Activated T-helper 1 cell treated with anti-CD3 and anti-CD28 coated beads, Interleukin-12 subunit alpha, Interleukin-12 subunit beta, Interleukin-2, Interleukin-4 antibody, amounts not matched to agents 30 ng/mL and 10 ng/mL and 1 ng/mL, durations not matched to agents 14 hours and 24 hours and 36 hours (primary cell): ENCODE measurements at regions of chr14 and their contacts with region 1.

Region 1: DNA sequence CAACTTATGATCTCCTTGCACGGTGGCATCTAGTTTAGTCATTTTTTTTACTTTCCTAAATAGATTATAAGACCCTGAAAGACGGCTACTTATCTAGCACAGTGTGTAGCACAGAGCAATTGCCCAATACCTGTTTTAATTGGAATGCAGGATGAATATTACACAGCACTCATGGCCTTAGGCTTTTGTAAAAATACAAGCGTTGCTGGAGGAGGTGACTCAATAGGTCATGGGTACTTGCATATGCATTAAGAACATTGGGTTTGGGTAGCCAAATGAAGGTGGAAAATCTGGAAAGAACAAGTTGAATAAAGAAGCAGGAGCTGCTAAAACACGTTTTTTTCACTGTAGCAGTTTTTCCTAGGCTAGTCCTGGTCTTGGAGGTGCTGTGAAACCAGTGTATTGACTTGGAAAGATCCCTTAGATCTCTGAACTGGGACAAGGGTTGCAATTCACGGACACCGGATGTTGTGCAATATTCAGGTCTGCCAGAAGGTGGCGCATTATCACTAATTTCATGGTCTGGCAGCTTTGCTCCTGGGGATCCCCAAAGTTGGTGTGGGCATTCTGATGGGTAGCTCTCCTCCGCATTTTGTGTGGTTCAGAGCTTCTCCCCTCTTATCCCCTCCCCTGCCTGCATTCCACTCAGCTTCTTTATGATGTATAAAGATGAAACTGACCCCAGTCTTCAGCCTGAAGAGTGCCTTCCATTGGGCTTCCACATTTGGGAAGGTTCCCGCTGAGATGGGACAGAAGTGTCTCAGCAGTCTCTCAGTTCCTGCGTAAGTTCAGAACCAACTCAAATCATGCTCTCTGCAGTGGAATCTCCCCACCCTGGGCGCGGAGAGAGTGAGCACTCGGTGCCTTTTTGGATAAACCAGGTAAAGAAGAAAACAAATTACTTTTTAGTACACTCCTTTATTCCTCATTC is 278.3 kb downstream of the NRXN3 start:
- DNase-seq: peak; percentile 13
- H3K4me3 Mint-ChIP-seq: no peak overlapping the region
- H3K27ac Mint-ChIP-seq: no peak overlapping the region
- H3K4me1 Mint-ChIP-seq: no peaks in the 10 kb centered on the region
- H3K27me3 Mint-ChIP-seq: no peaks in the 10 kb centered on the region

Region 2: DNA sequence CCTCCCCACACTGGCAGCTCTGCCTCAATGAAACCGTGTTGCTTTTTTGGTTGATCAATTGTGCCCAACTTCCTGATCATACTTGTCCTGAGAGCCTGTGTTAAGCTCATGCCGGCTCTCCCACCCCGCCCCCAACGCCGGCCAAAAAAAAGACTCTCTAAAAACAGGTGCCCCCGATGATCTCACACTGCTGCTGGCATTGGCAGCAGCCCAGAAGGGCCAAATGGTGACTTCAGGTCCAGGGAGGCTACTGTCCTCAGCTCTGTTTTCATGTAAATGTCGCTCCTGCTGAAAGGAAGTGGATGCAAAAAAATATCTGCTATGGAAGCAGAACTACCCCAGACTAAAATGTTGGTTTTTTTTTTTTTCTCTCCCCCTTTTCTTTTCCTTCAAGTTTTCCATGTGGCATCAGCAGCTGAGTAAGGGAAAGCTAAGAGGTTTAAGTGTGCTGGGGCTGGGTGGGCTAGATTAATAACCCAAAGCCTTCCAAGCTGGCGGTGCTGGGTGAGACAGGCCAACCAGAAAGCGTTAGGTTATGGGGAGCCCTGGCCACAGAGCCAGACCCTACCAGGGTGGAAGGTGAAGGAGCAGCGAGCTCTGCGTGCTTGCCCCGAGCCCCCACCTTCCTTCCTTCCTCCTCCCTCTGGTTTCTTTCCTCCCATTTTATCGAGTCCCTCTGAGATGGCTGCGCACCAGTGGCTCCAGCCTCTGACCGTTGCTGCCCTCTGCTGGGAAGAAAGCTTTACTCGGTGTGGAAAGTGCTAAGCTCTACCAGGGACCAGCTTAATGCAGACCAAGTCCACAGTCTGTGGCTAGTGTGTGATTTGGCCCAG is 117.8 kb after region 1 on chr14:
- intact Hi-C with region 1: loop called (anchors 1 kb)
- DNase-seq: peak; percentile 19
- H3K4me3 Mint-ChIP-seq: no peak overlapping the region
- H3K27ac Mint-ChIP-seq: no peak overlapping the region
- H3K4me1 Mint-ChIP-seq: no peaks in the 10 kb centered on the region
- H3K27me3 Mint-ChIP-seq: no peaks in the 10 kb centered on the region

Region 3: DNA sequence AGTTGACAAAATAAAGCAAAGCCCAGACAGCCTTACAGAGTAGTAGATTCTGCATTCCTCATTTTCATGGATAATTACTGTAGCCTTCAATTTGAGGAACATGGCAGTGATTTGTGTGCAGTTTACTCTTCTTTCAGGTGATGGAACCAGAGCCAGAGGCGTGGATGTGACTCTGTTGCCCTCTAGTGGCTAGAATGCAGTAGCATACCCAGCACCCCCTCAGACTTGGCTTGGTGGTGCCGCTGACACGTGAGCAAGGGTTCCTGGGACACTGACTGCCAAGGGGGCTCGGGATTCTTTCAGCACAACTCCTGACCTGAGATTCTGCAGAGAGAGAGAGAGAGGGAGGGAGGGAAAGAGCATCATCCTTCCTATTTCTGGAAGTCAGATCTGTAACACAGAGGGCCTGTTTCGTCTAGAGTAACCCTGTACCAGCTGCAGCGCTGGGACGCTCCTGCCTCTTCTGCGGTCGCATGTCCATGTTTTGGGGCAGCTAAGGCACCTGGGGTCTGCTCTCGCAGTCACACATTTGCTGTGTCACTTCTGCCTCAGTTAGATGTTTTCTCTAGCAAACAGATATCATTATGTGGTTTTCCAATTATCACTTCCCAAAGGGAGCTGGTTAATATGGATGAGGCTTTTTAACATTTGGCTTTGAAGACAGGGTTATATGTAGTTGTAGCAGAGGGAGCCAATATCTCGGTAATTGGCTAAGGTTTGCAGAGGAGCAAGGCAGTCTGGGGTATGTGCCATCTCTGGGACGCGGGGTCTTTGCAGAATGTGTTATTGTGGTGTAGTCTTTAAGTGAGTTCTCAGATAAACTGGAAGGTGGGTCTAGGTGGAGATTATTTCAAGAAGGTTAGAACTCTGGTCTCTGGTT is 149.9 kb after region 1 on chr14:
- intact Hi-C with region 1: loop called (anchors 1 kb)
- DNase-seq: peak; percentile 4
- H3K4me3 Mint-ChIP-seq: no peak overlapping the region
- H3K27ac Mint-ChIP-seq: no peak overlapping the region
- H3K4me1 Mint-ChIP-seq: no peaks in the 10 kb centered on the region
- H3K27me3 Mint-ChIP-seq: no peaks in the 10 kb centered on the region

Region 4: GRCh38 chr14:78697341-78697740 is 248.9 kb after region 1 on chr14:
- intact Hi-C with region 1: loop called (anchors 1 kb)
- DNase-seq: no peak
- H3K4me3 Mint-ChIP-seq: no peak overlapping the region
- H3K27ac Mint-ChIP-seq: no peak overlapping the region
- H3K4me1 Mint-ChIP-seq: no peaks in the 10 kb centered on the region
- H3K27me3 Mint-ChIP-seq: no peaks in the 10 kb centered on the region

Region 5: GRCh38 chr14:78836777-78837176 is 388.3 kb after region 1 on chr14:
- intact Hi-C with region 1: loop called (anchors 5 kb)
- DNase-seq: no peak
- H3K4me3 Mint-ChIP-seq: no peak overlapping the region
- H3K27ac Mint-ChIP-seq: no peak overlapping the region
- H3K4me1 Mint-ChIP-seq: no peaks in the 10 kb centered on the region
- H3K27me3 Mint-ChIP-seq: no peaks in the 10 kb centered on the region